ENCODE measurements at regions of chr14 and their contacts with region 1.

Region 1: DNA sequence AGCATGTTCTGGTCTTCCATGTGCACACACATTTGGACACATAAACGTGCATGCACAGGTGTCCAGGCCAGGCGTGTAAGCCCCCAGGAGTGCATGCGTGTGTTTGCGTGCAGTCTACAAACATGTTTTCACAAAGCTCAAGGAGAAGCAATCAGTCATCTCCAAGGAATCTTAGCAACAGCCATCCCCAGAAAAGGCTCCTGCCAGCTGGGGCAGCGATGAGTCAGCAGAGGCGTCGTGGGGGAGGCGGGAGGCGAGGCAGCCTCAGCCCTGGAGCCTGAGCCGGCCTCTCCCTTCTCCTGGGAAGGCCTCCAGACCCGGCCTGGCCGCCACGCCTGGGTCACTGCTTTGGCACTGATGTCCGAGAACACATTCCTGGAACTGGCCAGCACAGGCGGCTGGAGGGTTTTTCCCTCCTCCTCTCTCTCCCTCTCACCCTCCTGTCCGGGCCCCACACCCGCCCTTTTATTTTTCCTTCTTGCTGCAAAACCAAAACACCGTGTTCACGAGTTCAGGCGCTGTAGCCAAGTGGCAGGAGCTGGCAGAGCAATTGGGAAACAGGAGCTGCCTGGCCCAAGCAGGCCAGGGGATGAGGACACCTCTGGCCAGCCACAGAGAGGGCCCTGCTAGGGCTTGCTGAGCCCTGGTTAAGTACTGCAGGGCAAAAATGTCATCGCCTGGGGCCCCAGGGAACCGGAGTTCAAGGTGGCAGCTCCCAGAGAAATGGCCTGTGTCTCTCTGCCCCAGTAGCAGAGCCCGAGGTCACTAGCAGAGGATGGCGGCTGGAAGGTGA is 92.7 kb downstream of the LRRC74A start:
- DNase-seq: peak; percentile 98
- H3K4me3 Mint-ChIP-seq: peak overlapping the region; percentile 57
- H3K27ac Mint-ChIP-seq: peak overlapping the region; percentile 93
- H3K4me1 Mint-ChIP-seq: peaks cover 36% of the 10 kb centered on the region
- H3K27me3 Mint-ChIP-seq: no peaks in the 10 kb centered on the region
- CTCF ChIP-seq: no peak

Region 2: DNA sequence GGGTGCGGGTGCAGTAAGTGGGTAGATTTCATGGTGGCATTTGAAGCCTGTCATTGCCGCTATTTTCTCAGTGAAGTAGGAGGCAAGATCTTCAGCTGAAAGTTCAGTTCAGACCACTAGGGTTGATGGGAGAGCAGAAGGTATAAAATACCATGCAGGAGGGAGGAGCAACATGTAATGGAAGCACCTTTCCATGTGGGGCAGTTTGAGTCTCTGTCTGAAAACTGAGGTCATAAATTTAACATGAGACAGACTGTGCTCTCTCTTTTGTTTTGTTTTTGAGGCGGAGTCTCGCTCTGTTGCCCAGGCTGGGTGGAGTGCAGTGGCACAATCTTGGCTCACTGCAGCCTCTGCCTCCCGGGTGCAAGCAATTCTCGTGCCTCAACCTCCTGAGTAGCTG is 70.1 kb before region 1 on chr14:
- CTCF ChIA-PET with region 1: no interaction called
- POLR2A ChIA-PET with region 1: no interaction called
- intact Hi-C with region 1: no loop called
- DNase-seq: no peak
- H3K4me3 Mint-ChIP-seq: no peak overlapping the region
- H3K27ac Mint-ChIP-seq: no peak overlapping the region
- H3K4me1 Mint-ChIP-seq: peaks cover 6% of the 10 kb centered on the region
- H3K27me3 Mint-ChIP-seq: peaks cover 12% of the 10 kb centered on the region
- CTCF ChIP-seq: no peak

Region 3: DNA sequence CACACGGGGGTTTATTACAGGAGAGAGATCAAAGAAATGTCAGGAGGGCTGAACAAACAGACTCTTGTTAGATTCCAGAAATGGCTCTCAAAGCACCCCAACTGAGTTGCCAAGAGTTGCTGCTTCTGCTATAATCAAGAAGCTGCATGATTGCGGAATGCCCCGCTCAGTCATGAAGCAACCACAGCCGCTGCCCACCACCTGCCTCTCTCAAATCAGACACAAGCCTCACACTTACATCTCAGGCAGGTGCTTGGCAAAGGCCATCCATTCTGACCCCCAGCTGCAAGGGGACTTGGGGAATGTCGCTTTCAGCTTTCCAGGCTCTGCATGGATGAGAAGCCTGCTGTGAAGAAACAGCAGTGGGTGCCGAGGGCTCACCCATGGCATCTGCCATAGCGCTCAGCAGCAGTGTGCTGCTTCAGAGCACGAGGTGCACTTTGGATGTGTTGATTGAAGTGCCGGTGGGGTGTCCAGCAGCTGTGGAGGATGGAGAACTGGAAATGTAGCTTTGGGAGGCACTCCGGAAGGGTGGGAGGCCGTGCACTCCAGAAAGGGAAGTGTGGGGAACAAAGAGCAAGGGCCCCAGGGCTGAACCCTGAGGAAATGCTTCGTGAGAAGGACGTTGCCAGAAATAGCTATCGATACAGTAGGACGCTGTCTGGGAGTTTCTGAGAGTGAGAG is 55.1 kb before region 1 on chr14:
- CTCF ChIA-PET with region 1: no interaction called
- POLR2A ChIA-PET with region 1: no interaction called
- intact Hi-C with region 1: no loop called
- DNase-seq: no peak
- H3K4me3 Mint-ChIP-seq: no peak overlapping the region
- H3K27ac Mint-ChIP-seq: no peak overlapping the region
- H3K4me1 Mint-ChIP-seq: no peaks in the 10 kb centered on the region
- H3K27me3 Mint-ChIP-seq: peaks cover 43% of the 10 kb centered on the region
- CTCF ChIP-seq: no peak

Region 4: DNA sequence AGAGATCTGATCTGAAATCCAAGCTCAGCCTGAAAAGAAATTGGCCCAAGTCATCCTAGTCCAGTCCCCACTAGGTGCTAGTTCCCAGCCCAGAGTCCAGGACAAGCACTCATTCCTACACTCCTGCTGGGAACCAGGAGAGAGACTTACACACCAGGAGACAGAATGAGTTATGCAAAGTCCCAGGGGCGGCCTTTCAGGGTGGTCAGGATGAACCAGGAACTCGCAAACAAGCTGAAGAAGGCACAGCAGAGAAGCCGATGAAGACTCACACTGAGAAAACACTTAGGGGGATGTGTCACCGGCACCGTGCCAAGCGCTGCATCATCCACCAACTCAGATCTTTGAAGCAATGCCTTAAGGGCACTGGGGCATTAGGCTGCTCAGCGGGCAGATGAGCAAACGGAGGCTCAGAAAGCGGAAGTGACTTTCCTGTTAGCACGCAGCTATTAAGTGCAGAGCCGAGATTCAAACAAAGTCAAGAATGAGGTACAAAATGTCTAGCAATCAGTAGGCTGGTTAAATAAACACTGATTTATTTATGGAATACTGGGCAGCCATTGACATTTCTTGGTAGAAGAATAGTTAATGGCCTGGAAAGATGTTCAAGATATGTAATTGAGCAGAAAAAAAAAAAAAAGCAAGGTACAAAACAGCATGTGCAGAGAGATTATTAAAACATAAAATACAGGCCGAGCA is 14.1 kb before region 1 on chr14:
- CTCF ChIA-PET with region 1: interaction called, 53 read pairs
- POLR2A ChIA-PET with region 1: interaction called, 28 read pairs
- intact Hi-C with region 1: no loop called
- DNase-seq: peak; percentile 99
- H3K4me3 Mint-ChIP-seq: peak overlapping the region; percentile 55
- H3K27ac Mint-ChIP-seq: peak overlapping the region; percentile 57
- H3K4me1 Mint-ChIP-seq: peaks cover 29% of the 10 kb centered on the region
- H3K27me3 Mint-ChIP-seq: no peaks in the 10 kb centered on the region
- CTCF ChIP-seq: no peak

Region 5: GRCh38 chr14:76941946-76942805 is 23.2 kb after region 1 on chr14:
- CTCF ChIA-PET with region 1: interaction called, 9 read pairs
- POLR2A ChIA-PET with region 1: interaction called, 35 read pairs
- intact Hi-C with region 1: no loop called
- DNase-seq: no peak
- H3K4me3 Mint-ChIP-seq: no peak overlapping the region
- H3K27ac Mint-ChIP-seq: no peak overlapping the region
- H3K4me1 Mint-ChIP-seq: peaks cover 12% of the 10 kb centered on the region
- H3K27me3 Mint-ChIP-seq: no peaks in the 10 kb centered on the region
- CTCF ChIP-seq: no peak

Region 6: GRCh38 chr14:76962303-76962660 is 43.3 kb after region 1 on chr14:
- CTCF ChIA-PET with region 1: interaction called, 11 read pairs
- POLR2A ChIA-PET with region 1: interaction called, 42 read pairs
- intact Hi-C with region 1: loop called (anchors 2 kb)
- DNase-seq: no peak
- H3K4me3 Mint-ChIP-seq: peak overlapping the region; percentile 74
- H3K27ac Mint-ChIP-seq: peak overlapping the region; percentile 92
- H3K4me1 Mint-ChIP-seq: peaks cover 37% of the 10 kb centered on the region
- H3K27me3 Mint-ChIP-seq: no peaks in the 10 kb centered on the region
- CTCF ChIP-seq: no peak

Region 7: GRCh38 chr14:77053046-77053841 is 134.3 kb after region 1 on chr14:
- CTCF ChIA-PET with region 1: interaction called, 496 read pairs
- POLR2A ChIA-PET with region 1: interaction called, 17 read pairs
- intact Hi-C with region 1: no loop called
- DNase-seq: peak; percentile 63
- H3K4me3 Mint-ChIP-seq: no peak overlapping the region
- H3K27ac Mint-ChIP-seq: peak overlapping the region; percentile 90
- H3K4me1 Mint-ChIP-seq: peaks cover 15% of the 10 kb centered on the region
- H3K27me3 Mint-ChIP-seq: no peaks in the 10 kb centered on the region
- CTCF ChIP-seq: peak; percentile 71

Region 8: DNA sequence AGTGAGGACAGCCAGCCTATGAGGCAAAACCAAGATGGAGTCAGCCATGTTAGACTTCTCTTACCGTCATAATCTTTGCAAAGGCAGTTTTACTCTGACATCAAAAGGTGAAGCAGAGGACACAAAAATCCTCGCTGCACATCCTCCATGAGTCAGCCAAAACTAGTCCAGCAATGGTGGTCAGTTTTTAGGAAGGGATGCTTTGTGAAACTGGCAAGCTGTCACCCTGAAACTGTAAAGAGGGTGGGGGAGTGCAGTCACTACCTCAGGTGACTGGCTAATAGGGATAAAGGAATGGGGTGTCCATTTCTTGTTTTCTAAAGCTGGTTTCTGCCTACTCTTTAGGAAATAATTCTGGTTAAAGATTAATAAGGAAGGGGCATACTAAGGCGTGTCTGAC is 173.7 kb after region 1 on chr14:
- CTCF ChIA-PET with region 1: interaction called, 13 read pairs
- POLR2A ChIA-PET with region 1: interaction called, 31 read pairs
- intact Hi-C with region 1: loop called (anchors 1 kb)
- DNase-seq: no peak
- H3K4me3 Mint-ChIP-seq: no peak overlapping the region
- H3K27ac Mint-ChIP-seq: no peak overlapping the region
- H3K4me1 Mint-ChIP-seq: peaks cover 19% of the 10 kb centered on the region
- H3K27me3 Mint-ChIP-seq: no peaks in the 10 kb centered on the region
- CTCF ChIP-seq: no peak

Measured in MCF 10A (cell line).